Ascending aorta (tissue), 2 donors: ENCODE measurements at regions of chr19 and their contacts with region 1.

Region 1: DNA sequence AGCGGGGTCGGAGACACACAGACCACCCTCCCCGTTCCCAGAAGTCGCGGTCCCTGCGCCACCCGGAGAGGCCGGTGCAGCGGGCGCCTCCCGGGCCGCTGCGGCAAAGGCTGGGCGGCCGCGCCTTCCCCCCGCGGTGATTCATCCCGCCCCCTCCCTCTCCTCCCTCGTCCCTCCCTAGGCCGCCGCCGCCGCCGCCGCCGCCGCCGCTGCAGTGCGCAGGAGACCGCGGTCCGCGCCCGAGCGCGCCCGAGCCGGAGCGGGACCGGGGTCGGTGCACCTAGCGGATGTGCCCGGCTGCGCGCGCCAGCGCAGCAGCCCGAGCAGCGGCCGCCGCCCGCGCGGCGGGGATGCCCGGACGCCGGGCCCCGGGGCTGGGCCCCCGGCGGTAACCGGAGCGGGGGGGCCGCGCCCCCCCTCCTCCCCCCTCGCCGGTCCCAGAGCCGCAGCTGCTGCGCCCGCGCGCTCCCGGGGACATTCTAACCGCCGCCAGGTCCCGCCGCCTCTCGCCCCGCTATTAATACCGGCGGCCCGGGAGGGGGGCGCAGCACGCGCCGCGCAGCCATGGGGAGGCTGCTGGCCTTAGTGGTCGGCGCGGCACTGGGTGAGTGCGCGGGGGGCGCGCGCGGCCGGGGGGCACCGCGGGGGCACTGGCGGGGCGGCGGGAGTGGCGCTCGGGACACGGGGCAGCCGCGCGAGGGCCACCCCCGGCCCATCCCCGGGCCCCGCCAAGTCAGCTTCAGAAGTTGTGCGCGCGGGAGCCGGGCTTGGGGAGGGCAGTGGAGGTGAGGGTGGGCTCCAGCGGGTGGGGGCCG is at the start of gene SCN1B:
- DNase-seq: peak in 1 of 2 donors; percentile 74
- H3K4me3 ChIP-seq: peak within 1 kb of the TSS; percentile 65 to 75
- H3K27ac ChIP-seq: peak within 1 kb of the TSS in 1 of 2 donors; percentile 43
- H3K4me1 ChIP-seq: peaks cover 4 to 10% of the 10 kb centered on the region in 2 donors
- H3K27me3 ChIP-seq: no peaks in the 10 kb centered on the region
- CTCF ChIP-seq: no peak
- total RNA-seq, gene SCN1B: 20.8 TPM

Region 2: GRCh38 chr19:34999498-35000341 is 30.7 kb before region 1 on chr19 and contains the start of gene GRAMD1A:
- intact Hi-C with region 1: loop called (anchors 1 kb)
- DNase-seq: peak; percentile 84 to 93
- H3K4me3 ChIP-seq: peak within 1 kb of the TSS; percentile 94 to 99
- H3K27ac ChIP-seq: peak within 1 kb of the TSS; percentile 95 to 100
- H3K4me1 ChIP-seq: peaks cover 9 to 22% of the 10 kb centered on the region in 2 donors
- H3K27me3 ChIP-seq: no peaks in the 10 kb centered on the region
- CTCF ChIP-seq: no peak
- total RNA-seq, gene GRAMD1A: 103 TPM